ENCODE measurements at regions of chr17 and their contacts with region 1.

Region 1: GRCh38 chr17:3636154-3636907 is at the starts of genes CTNS and SHPK:
- DNase-seq: peak; percentile 98
- total RNA-seq, gene CTNS: 6.4 TPM
- total RNA-seq, gene SHPK: 4.8 TPM

Region 2: GRCh38 chr17:3535253-3535995 is 100.9 kb before region 1 on chr17:
- intact Hi-C with region 1: loop called (anchors 10 kb)
- DNase-seq: no peak

Region 3: GRCh38 chr17:3668279-3669085 is 32.2 kb after region 1 on chr17 and contains the starts of genes EMC6 and TAX1BP3:
- intact Hi-C with region 1: loop called (anchors 2 kb)
- DNase-seq: peak; percentile 100
- total RNA-seq, gene EMC6: 54.0 TPM
- total RNA-seq, gene TAX1BP3: 158 TPM

Region 4: DNA sequence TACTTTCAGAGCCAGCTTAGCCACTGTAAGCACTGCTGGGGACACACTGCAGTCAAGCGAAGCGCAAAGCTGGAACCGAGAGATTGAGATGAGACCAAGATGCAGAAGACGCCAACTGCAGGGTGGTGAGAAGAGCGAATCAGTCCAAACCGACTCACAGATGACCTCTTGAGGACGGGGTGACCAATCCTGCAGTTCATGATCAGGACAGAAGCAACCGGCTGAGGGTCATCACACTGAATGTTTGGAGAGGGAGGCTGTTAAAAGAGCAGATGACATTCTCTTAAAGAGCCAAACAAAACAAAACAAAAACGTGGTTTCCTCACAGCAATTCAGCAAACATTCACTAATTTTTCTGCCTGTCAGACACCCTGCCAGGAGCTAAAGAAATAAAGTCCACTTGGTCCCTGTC is 95.9 kb after region 1 on chr17:
- intact Hi-C with region 1: no loop called
- DNase-seq: no peak